Dendritic cell treated with granulocyte-macrophage colony-stimulating factor and Interleukin-4, amounts not matched to agents 40 ng/mL and 50 ng/mL, for 4 days (primary cell): ENCODE measurements at regions of chr15 and their contacts with region 1.

Region 1: DNA sequence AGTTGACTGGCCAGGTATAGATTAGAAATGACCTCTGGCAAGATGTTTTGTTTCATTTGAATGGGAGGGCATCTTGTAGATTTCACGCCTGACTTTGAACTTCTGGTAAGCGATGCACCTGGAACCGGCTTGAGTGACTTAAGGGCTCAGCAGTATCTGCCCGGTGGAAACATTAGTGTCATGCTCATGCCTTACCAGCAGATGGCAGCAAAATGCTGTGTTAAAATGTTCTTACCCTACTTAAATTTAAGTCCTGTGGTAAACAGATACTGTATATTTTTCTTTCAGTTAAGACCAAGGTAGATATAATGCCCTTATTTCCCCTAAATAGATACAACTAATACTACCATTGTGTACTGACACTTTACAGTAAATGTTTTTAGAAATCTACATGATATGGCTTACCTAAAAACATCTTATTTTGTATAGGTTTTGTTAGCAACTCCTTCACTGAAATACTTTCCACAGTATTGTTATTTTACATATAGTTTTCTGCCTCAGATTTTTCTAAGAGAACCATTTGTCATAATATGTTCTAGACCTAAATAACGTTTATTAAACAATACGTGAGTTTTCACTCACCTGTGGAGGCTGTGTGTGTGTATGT is 25.5 kb downstream of the ASB7 start:
- H3K4me3 Mint-ChIP-seq: no peak overlapping the region
- H3K27ac Mint-ChIP-seq: no peak overlapping the region
- H3K4me1 Mint-ChIP-seq: peaks cover 4% of the 10 kb centered on the region
- H3K27me3 Mint-ChIP-seq: no peaks in the 10 kb centered on the region

Region 2: DNA sequence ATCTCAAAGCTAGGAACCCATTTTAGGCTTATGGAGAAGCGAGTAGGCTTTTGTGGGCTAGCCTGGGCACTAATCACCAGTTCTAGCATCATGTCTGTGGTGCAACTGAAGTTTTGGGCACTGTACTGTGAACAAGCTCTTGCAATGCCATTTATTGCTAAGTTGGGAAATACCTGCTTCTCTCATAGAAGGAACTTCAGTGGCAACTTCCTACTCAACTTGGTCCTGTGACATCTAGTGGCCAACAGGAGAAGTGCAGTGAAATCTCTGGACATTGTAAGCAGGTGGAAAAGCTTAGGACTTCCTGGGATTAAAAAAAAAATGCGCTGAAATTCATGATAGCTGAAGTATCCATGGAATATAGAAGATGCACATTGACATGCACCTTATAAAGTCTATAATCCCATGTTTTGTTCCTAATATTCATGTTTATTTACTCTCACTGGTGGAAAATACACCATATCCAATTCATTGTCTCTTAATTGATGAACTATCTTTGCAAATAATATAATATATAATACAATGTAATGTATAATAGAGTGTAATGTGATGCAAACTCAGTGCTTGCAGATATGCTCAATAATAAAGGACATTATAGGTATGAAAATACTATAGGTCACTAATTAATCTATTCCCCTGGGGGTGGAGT is 245.3 kb after region 1 on chr15:
- intact Hi-C with region 1: loop called (anchors 1 kb)
- H3K4me3 Mint-ChIP-seq: no peak overlapping the region
- H3K27ac Mint-ChIP-seq: no peak overlapping the region
- H3K4me1 Mint-ChIP-seq: peaks cover 5% of the 10 kb centered on the region
- H3K27me3 Mint-ChIP-seq: peaks cover 40% of the 10 kb centered on the region

Region 3: GRCh38 chr15:100994597-100995446 is 366.9 kb after region 1 on chr15:
- intact Hi-C with region 1: loop called (anchors 5 kb)
- H3K4me3 Mint-ChIP-seq: no peak overlapping the region
- H3K27ac Mint-ChIP-seq: peak overlapping the region; percentile 63
- H3K4me1 Mint-ChIP-seq: peaks cover 25% of the 10 kb centered on the region
- H3K27me3 Mint-ChIP-seq: no peaks in the 10 kb centered on the region

Region 4: GRCh38 chr15:101008158-101009139 is 380.6 kb after region 1 on chr15:
- intact Hi-C with region 1: loop called (anchors 2 kb)
- H3K4me3 Mint-ChIP-seq: peak overlapping the region; percentile 76
- H3K27ac Mint-ChIP-seq: peak overlapping the region; percentile 50
- H3K4me1 Mint-ChIP-seq: peaks cover 36% of the 10 kb centered on the region
- H3K27me3 Mint-ChIP-seq: peaks cover 14% of the 10 kb centered on the region